ENCODE measurements at regions of chr11 and their contacts with region 1.

Region 1: GRCh38 chr11:110092515-110093404 is at the start of gene ZC3H12C:
- DNase-seq: peak; percentile 89
- H3K4me3 ChIP-seq: peak within 1 kb of the TSS; percentile 58 to 92 (median 88)
- H3K27ac ChIP-seq: peak within 1 kb of the TSS; percentile 81
- H3K4me1 ChIP-seq: peaks cover 22% of the 10 kb centered on the region
- H3K27me3 ChIP-seq: peaks cover 2 to 3% of the 10 kb centered on the region in 2 experiments
- CTCF ChIP-seq: peak; percentile 54 to 60
- POLR2A ChIP-seq: peak; percentile 32
- total RNA-seq, gene ZC3H12C: 14.5 and 14.7 TPM in 2 replicates

Region 2: DNA sequence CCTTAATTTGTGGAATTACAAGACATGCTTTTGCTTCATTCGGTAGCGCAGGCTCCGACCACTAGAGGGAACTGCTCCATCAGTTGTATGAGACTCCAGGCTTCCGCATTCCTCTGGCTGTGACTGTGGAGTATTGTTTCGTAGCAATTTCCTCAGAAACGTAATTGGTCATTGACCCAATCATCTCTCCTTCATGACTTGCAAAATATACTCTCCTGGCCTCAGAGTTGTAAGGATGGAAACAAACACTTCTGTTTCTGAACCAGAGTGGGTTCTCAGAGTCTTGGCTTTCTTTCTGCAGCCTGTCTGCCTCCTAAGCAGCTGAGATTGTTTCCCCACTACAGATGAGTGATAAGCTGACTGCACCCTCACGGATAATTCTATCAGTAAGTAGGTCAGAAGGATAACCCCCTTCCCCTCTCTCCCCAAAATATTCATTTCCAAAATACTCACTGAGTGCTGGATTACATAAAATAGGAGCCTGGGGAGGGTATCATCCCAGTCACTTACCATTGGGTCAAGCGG is 146.4 kb before region 1 on chr11:
- CTCF ChIA-PET with region 1: interaction called, 21 read pairs
- POLR2A ChIA-PET with region 1: no interaction called
- dilution Hi-C with region 1: no loop called
- intact Hi-C with region 1: loop called (anchors 1 kb)
- DNase-seq: peak; percentile 97
- H3K4me3 ChIP-seq: peak overlapping the region in 1 of 3 experiments; percentile 31
- H3K27ac ChIP-seq: peak overlapping the region; percentile 95
- H3K4me1 ChIP-seq: peaks cover 8% of the 10 kb centered on the region
- H3K27me3 ChIP-seq: no peaks in the 10 kb centered on the region
- CTCF ChIP-seq: peak; percentile 91
- POLR2A ChIP-seq: no peak

Region 3: GRCh38 chr11:110019675-110020074 is 73.1 kb before region 1 on chr11:
- CTCF ChIA-PET with region 1: no interaction called
- POLR2A ChIA-PET with region 1: no interaction called
- dilution Hi-C with region 1: no loop called
- intact Hi-C with region 1: no loop called
- DNase-seq: no peak
- H3K4me3 ChIP-seq: no peak overlapping the region
- H3K27ac ChIP-seq: no peak overlapping the region
- H3K4me1 ChIP-seq: no peaks in the 10 kb centered on the region
- H3K27me3 ChIP-seq: no peaks in the 10 kb centered on the region
- CTCF ChIP-seq: no peak
- POLR2A ChIP-seq: no peak

Region 4: GRCh38 chr11:110053848-110054414 is 38.8 kb before region 1 on chr11:
- CTCF ChIA-PET with region 1: no interaction called
- POLR2A ChIA-PET with region 1: no interaction called
- dilution Hi-C with region 1: no loop called
- intact Hi-C with region 1: no loop called
- DNase-seq: no peak
- H3K4me3 ChIP-seq: no peak overlapping the region
- H3K27ac ChIP-seq: no peak overlapping the region
- H3K4me1 ChIP-seq: no peaks in the 10 kb centered on the region
- H3K27me3 ChIP-seq: no peaks in the 10 kb centered on the region
- CTCF ChIP-seq: no peak
- POLR2A ChIP-seq: no peak

Region 5: DNA sequence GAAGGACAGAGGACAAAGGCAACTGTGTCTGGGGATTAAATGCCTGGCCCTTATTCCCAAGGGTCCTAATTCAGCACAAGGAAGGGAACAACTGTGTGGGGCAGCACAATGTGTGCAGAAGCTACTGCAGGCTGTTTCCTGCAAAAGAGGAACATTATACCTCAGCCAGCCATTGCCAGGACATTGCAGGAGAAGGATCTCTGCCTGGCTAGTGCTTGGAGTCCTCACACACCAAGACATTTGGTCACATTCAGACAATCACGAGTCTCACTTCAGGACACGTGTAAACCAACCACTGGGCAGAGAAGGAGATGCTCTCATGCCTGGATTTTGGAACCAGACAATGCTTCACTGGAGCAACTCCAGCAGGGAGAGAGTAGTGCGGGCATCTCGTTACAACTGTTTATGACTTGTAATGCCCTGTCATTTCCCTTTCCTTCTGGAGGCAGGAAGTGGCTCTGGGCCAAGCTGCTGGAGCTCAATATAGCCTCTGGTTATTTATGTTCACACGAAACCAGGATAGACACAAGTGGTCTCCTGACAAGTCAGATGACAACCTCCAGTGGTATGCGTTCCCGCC is 23.5 kb before region 1 on chr11:
- CTCF ChIA-PET with region 1: interaction called, 29 read pairs
- POLR2A ChIA-PET with region 1: interaction called, 3 read pairs
- dilution Hi-C with region 1: no loop called
- intact Hi-C with region 1: loop called (anchors 1 kb)
- DNase-seq: peak; percentile 97
- H3K4me3 ChIP-seq: no peak overlapping the region
- H3K27ac ChIP-seq: peak overlapping the region; percentile 95
- H3K4me1 ChIP-seq: peaks cover 22% of the 10 kb centered on the region
- H3K27me3 ChIP-seq: no peaks in the 10 kb centered on the region
- CTCF ChIP-seq: no peak
- POLR2A ChIP-seq: peak; percentile 71

Region 6: GRCh38 chr11:110121204-110121603 is 28.4 kb after region 1 on chr11:
- CTCF ChIA-PET with region 1: no interaction called
- POLR2A ChIA-PET with region 1: no interaction called
- dilution Hi-C with region 1: no loop called
- intact Hi-C with region 1: loop called (anchors 1 kb)
- DNase-seq: peak; percentile 87
- H3K4me3 ChIP-seq: no peak overlapping the region
- H3K27ac ChIP-seq: peak overlapping the region; percentile 24
- H3K4me1 ChIP-seq: peaks cover 11% of the 10 kb centered on the region
- H3K27me3 ChIP-seq: no peaks in the 10 kb centered on the region
- CTCF ChIP-seq: no peak
- POLR2A ChIP-seq: no peak

Region 7: DNA sequence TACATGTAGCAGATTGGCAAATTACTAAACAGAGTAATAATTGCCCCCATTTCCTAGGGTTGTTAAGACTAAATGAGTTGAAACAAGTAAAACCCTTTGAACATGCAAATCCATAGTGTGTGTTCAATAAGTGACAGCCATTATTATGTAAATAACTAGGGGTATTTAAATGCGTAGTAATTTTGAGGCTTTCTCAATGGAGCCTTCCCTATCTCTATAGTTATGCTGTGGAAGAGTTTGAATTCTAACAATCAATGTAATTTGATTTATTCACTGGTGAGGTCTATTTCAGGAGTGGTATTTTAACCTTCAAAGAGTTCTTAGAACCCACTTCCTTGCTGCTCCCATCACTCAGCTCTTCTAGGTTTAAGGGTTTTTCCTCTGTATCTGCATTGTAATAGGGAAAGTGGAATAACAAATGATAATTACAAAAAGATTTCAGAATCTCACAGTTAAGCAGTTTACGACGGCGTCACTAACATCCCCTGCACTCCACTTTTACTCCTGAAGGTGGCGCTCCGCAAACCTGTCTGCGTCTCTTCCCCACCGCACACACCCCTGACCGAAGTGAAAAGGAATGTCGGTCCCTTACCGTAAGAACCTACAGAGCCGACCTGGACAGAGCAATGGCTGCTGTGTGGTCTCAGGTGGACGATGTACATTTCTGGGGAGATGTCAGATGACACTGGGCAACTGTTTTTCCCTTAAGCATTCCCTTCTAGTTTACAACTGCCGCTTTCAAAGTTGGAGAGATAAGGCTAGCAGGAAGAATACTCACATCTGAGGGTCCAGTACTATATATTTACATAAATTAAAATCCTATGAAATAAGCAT is 81.3 kb after region 1 on chr11:
- CTCF ChIA-PET with region 1: no interaction called
- POLR2A ChIA-PET with region 1: no interaction called
- dilution Hi-C with region 1: no loop called
- intact Hi-C with region 1: loop called (anchors 5 kb)
- DNase-seq: peak; percentile 77
- H3K4me3 ChIP-seq: peak overlapping the region in 1 of 3 experiments; percentile 34
- H3K27ac ChIP-seq: no peak overlapping the region
- H3K4me1 ChIP-seq: peaks cover 7% of the 10 kb centered on the region
- H3K27me3 ChIP-seq: no peaks in the 10 kb centered on the region
- CTCF ChIP-seq: peak; percentile 87 to 92
- POLR2A ChIP-seq: no peak

Region 8: GRCh38 chr11:110376711-110377324 is 284.1 kb after region 1 on chr11:
- CTCF ChIA-PET with region 1: no interaction called
- POLR2A ChIA-PET with region 1: no interaction called
- dilution Hi-C with region 1: no loop called
- intact Hi-C with region 1: loop called (anchors 5 kb)
- DNase-seq: peak; percentile 93
- H3K4me3 ChIP-seq: no peak overlapping the region
- H3K27ac ChIP-seq: no peak overlapping the region
- H3K4me1 ChIP-seq: peaks cover 24% of the 10 kb centered on the region
- H3K27me3 ChIP-seq: no peaks in the 10 kb centered on the region
- CTCF ChIP-seq: peak; percentile 52 to 72
- POLR2A ChIP-seq: no peak